Esophagus squamous epithelium (tissue), 5 donors: ENCODE measurements at regions of chr9 and their contacts with region 1.

Region 1: GRCh38 chr9:93159601-93160471 is 24.1 kb upstream of the WNK2 start:
- DNase-seq: no peak
- H3K4me3 ChIP-seq: no peak overlapping the region
- H3K27ac ChIP-seq: no peak overlapping the region
- H3K4me1 ChIP-seq: peaks cover 0 to 15% (median 5%) of the 10 kb centered on the region in 3 donors
- H3K27me3 ChIP-seq: no peaks in the 10 kb centered on the region
- CTCF ChIP-seq: peak; percentile 81 to 97 (median 95)
- POLR2A ChIP-seq: no peak

Region 2: DNA sequence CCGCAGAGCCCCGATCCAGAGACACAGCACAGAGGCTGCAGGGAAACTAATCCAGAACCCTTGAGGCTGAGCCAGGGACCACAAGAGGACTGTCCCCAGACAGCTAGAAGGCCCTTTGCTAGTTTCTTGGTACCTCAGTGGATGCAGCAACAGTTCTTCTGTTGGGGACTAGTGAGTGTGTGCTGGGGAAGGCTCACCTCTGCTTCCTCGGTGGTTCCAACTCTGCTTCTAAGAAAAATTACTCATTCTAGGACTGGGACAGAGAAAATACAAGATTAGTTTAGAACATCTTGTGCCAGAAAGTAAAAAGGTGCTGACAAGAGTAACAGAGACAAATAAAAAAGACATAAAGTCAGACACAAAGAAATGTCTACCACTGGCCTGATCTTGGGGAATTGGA is 262.5 kb before region 1 on chr9:
- intact Hi-C with region 1: no loop called
- DNase-seq: no peak
- H3K4me3 ChIP-seq: no peak overlapping the region
- H3K27ac ChIP-seq: no peak overlapping the region
- H3K4me1 ChIP-seq: no peaks in the 10 kb centered on the region
- H3K27me3 ChIP-seq: no peaks in the 10 kb centered on the region
- CTCF ChIP-seq: no peak
- POLR2A ChIP-seq: no peak

Region 3: DNA sequence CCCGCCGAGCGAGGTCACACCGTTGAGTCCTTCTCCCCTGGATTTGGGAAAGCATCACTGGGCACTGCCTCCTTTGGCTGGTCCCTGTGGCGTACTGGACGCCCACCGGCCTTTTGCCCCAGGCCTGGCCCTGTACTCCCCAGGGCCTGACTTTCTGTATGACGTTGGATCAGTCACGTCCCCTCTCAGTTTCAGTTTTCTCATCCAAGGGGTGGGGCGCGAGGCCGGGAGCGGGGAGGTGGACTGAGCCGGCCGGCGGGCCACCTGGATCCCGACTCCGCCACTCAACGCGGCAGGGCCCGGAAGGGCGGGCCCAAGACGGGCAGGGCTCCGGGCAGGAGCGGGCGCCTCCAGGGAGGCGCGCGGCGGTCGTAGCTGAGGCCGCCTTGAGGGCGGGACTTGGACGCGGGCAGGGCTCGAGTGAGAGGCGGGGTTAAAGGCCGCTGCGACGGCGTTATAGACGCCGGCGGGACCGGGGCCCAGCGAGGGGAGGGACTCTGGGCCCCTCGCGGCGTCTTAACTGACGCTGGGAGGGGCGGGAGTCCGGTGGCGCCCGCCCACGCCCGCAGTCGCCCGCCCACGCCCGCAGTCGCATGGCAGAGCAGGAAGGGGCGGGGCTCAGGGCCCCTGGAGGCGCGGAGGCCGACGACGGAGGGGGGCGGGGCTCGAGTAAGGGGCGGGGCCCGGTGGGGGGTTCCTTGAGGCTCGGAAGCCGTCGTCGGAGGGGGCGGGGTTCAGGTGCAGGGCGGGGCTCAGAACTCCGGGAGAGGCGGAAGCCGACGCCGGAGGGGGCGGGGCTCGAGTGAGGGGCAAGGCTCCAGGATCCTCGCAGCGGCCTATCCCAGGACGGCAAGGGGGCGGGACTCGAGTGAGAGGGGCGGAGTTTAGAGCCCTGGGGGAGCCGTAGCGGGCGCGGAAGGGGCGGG is 64.4 kb before region 1 on chr9:
- intact Hi-C with region 1: no loop called
- DNase-seq: peak; percentile 97
- H3K4me3 ChIP-seq: peak overlapping the region; percentile 59 to 99 (median 92)
- H3K27ac ChIP-seq: peak overlapping the region; percentile 93 to 99 (median 97)
- H3K4me1 ChIP-seq: peaks cover 37 to 66% (median 42%) of the 10 kb centered on the region in 3 donors
- H3K27me3 ChIP-seq: no peaks in the 10 kb centered on the region
- CTCF ChIP-seq: no peak
- POLR2A ChIP-seq: peak in 2 of 4 donors; percentile 81 to 87

Region 4: DNA sequence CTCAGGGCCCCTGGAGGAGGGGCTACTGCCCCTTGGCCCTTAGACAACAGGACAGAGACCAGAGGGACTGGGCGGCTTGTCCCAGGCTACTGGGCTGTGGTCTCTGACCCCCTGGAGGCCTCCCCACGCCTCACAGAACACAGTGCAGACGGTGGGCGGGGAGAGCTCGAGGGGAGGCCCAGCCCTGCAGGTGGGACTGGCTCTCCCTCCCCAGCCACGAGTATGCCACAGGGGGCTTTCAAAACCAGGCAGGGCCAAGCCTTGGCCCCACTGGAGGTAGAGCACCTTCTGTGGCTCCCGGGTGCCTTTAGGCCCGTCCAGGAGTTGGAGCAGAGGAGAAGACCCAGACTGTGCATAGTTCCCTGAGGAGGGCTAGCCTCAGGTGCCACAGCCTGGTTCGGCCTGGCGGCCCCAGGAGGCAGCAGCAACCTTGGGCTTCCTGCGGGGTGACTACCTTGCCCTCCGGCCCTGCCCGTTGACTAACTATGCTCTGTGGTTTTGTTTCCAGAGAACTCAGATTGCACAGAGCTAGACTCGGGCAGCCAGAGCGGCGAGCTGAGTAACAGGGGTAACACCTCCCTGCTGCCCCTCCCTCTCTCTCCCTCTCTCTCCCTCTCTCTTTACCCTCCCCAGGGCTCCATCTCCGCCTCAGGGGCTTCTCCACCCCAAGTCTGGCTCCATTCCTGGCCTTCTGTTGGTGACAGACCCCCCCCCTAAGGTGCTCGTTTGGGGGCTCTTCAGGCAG is 48.3 kb before region 1 on chr9:
- intact Hi-C with region 1: loop called (anchors 5 kb)
- DNase-seq: no peak
- H3K4me3 ChIP-seq: no peak overlapping the region
- H3K27ac ChIP-seq: no peak overlapping the region
- H3K4me1 ChIP-seq: peaks cover 6 to 25% (median 10%) of the 10 kb centered on the region in 3 donors
- H3K27me3 ChIP-seq: no peaks in the 10 kb centered on the region
- CTCF ChIP-seq: no peak
- POLR2A ChIP-seq: no peak

Region 5: DNA sequence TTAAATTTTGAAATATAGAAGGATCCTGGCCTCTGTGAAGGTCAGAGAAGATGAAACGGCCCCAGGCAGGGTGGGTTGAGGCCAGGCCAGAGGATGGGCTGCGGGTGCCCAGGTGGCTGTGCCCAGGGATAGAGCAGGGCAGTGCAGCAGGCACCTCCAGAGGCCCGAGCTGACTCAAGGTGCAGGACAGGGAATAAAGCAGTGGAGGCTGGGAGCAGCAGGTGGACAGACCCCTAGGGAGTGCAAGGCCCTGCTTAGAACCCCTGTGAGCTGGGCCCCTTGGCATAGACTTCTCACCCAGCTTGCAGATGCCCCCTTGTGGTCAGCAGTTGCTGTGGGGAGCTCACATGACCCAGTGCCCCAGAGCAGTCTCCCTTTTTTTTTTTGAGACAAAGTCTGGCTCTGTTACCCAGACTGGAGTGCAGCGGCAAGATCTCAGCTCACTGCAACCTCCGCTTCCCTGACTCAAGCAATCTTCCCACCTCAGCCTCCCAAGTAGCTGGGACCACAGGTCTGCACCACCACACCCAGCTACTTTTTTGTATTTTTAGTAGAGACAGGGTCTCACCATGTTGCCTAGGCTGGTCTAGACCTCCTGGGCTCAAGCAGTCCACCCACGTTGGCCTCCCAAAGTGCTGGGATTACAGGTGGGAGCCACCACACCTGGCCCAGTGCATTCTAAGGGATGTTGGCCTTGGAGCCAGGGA is 142.9 kb after region 1 on chr9:
- intact Hi-C with region 1: loop called (anchors 5 kb)
- DNase-seq: no peak
- H3K4me3 ChIP-seq: no peak overlapping the region
- H3K27ac ChIP-seq: no peak overlapping the region
- H3K4me1 ChIP-seq: no peaks in the 10 kb centered on the region
- H3K27me3 ChIP-seq: peaks cover 0 to 6% (median 0%) of the 10 kb centered on the region in 4 donors
- CTCF ChIP-seq: peak; percentile 22 to 54 (median 40)
- POLR2A ChIP-seq: no peak